ENCODE measurements at regions of chr7 and their contacts with region 1.

Region 1: DNA sequence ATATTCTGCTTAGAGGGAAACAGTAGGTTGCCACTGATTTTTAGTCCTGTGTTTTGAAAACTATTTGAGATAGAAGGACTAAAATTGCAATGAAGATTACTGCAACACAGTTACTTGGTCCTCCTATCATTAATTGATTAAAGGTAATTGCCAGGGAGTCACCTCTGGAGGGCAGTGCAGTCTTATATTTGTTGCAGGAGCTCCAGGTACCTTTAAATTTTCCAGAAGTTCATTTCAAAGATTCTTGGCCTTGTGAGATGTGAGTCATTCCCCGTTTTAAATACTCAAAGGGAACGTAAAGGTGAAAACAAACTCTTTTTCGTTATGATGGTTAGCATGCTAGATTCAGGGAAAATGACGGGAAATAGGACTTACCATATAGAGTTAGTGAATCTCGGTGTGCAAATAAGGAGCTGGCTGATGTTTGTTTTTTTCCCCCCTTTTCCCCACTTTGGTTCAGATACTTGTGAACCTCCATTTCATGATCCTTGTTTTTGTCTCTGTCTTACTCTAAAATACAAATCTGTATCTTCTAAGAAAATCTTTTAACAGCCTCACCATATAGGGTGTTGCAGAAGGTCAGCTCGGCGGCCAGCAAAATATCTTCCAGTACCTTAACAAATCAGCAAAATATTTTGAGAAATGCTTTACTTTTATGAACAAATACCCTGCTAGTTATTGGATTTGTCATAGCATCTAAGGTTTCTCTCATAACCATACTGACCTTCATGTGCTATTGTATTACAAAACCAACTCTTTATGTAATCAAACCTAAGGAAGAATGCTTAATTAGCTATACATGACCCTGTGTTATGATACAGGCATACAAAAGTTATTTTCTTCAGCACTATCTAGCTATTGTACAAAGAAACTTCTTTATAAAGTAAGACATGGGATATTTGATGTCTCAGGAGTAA is 143.0 kb upstream of the HDAC9 start:
- DNase-seq: peak in 1 of 2 donors; percentile 34
- ATAC-seq: peak in 6 of 8 donors; percentile 55 to 71 (median 62)
- H3K4me3 ChIP-seq: no peak overlapping the region
- H3K27ac ChIP-seq: no peak overlapping the region
- H3K4me1 ChIP-seq: peaks cover 0 to 19% (median 8%) of the 10 kb centered on the region in 9 donors
- H3K27me3 ChIP-seq: no peaks in the 10 kb centered on the region
- CTCF ChIP-seq: peak in 8 of 9 donors; percentile 45 to 77 (median 68)

Region 2: GRCh38 chr7:18495412-18496340 is 143.1 kb after region 1 on chr7 and contains the start of gene HDAC9:
- intact Hi-C with region 1: loop called in 6 of 10 experiments (anchors 5 to 10 kb)
- DNase-seq: peak; percentile 17 to 73
- ATAC-seq: peak; percentile 85 to 95 (median 92)
- H3K4me3 ChIP-seq: peak within 1 kb of the TSS; percentile 30 to 64 (median 54)
- H3K27ac ChIP-seq: peak within 1 kb of the TSS; percentile 1 to 86 (median 84)
- H3K4me1 ChIP-seq: peaks cover 0 to 43% (median 19%) of the 10 kb centered on the region in 9 donors
- H3K27me3 ChIP-seq: no peaks in the 10 kb centered on the region
- CTCF ChIP-seq: no peak
- total RNA-seq, gene HDAC9: 8.3 to 66.1 (median 43.2) TPM

Region 3: GRCh38 chr7:18570890-18571478 is 218.4 kb after region 1 on chr7:
- intact Hi-C with region 1: loop called (anchors 2 to 10 kb)
- DNase-seq: no peak
- ATAC-seq: peak in 7 of 8 donors; percentile 20 to 57 (median 49)
- H3K4me3 ChIP-seq: no peak overlapping the region
- H3K27ac ChIP-seq: peak overlapping the region in 1 of 10 donors; percentile 35
- H3K4me1 ChIP-seq: peaks cover 0 to 26% (median 13%) of the 10 kb centered on the region in 9 donors
- H3K27me3 ChIP-seq: no peaks in the 10 kb centered on the region
- CTCF ChIP-seq: peak in 8 of 9 donors; percentile 9 to 72 (median 60)

Region 4: GRCh38 chr7:18648849-18649758 is 296.5 kb after region 1 on chr7:
- intact Hi-C with region 1: no loop called
- DNase-seq: no peak
- ATAC-seq: peak in 3 of 8 donors; percentile 41 to 87 (median 49)
- H3K4me3 ChIP-seq: no peak overlapping the region
- H3K27ac ChIP-seq: no peak overlapping the region
- H3K4me1 ChIP-seq: peaks cover 0 to 6% (median 0%) of the 10 kb centered on the region in 9 donors
- H3K27me3 ChIP-seq: no peaks in the 10 kb centered on the region
- CTCF ChIP-seq: no peak

Region 5: GRCh38 chr7:18666107-18666728 is 313.6 kb after region 1 on chr7:
- intact Hi-C with region 1: loop called in 9 of 10 experiments (anchors 1 to 10 kb)
- DNase-seq: peak; percentile 72 to 84
- ATAC-seq: peak; percentile 86 to 97 (median 87)
- H3K4me3 ChIP-seq: no peak overlapping the region
- H3K27ac ChIP-seq: no peak overlapping the region
- H3K4me1 ChIP-seq: peaks cover 0 to 29% (median 13%) of the 10 kb centered on the region in 9 donors
- H3K27me3 ChIP-seq: no peaks in the 10 kb centered on the region
- CTCF ChIP-seq: peak; percentile 78 to 97 (median 92)

Region 6: GRCh38 chr7:19051767-19052375 is 699.3 kb after region 1 on chr7:
- intact Hi-C with region 1: loop called in 2 of 10 experiments (anchors 10 kb)
- DNase-seq: no peak
- ATAC-seq: no peak
- H3K4me3 ChIP-seq: no peak overlapping the region
- H3K27ac ChIP-seq: no peak overlapping the region
- H3K4me1 ChIP-seq: no peaks in the 10 kb centered on the region
- H3K27me3 ChIP-seq: no peaks in the 10 kb centered on the region
- CTCF ChIP-seq: peak; percentile 43 to 80 (median 73)

Region 7: GRCh38 chr7:19117091-19117869 is 764.7 kb after region 1 on chr7 and contains the start of gene TWIST1:
- intact Hi-C with region 1: loop called in 1 of 10 experiments (anchors 10 kb)
- DNase-seq: peak; percentile 46 to 64
- ATAC-seq: peak; percentile 72 to 88 (median 82)
- H3K4me3 ChIP-seq: peak within 1 kb of the TSS; percentile 47 to 72 (median 62)
- H3K27ac ChIP-seq: peak within 1 kb of the TSS in 9 of 10 donors; percentile 36 to 70 (median 52)
- H3K4me1 ChIP-seq: peaks cover 0 to 32% (median 18%) of the 10 kb centered on the region in 9 donors
- H3K27me3 ChIP-seq: peaks cover 9 to 99% (median 94%) of the 10 kb centered on the region in 7 donors
- CTCF ChIP-seq: no peak
- total RNA-seq, gene TWIST1: 0.45 to 3.5 (median 1.3) TPM

Region 8: DNA sequence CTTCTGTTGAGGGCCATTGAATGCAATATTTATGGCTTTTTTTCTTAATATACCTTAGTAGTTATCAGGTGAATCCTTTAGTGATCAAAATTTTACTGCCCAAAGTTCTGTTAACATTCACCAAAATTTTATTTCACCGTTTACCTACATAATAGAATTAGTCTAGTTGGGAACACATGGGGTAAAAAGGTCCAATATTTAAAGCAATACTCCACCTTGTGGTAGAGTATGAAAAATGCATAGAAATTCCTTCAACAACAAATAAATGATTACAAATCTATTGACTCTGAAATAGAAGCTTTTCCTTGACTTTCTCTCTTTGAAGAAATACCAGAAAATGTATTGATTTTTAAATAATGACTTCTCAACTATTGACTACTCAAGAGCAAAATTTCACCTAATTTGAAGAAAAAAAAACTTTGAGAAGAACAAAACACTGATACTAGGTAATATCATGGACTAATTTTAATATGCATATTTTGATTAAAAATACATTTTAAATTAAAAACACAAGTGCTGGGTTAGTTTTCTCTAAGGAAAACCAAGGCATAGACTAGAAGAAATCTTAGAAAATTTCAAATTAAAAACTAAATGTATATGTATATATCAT is 1312.9 kb after region 1 on chr7:
- intact Hi-C with region 1: loop called in 4 of 10 experiments (anchors 5 to 10 kb)
- DNase-seq: no peak
- ATAC-seq: no peak
- H3K4me3 ChIP-seq: no peak overlapping the region
- H3K27ac ChIP-seq: no peak overlapping the region
- H3K4me1 ChIP-seq: no peaks in the 10 kb centered on the region
- H3K27me3 ChIP-seq: peaks cover 0 to 4% (median 0%) of the 10 kb centered on the region in 7 donors
- CTCF ChIP-seq: peak in 8 of 9 donors; percentile 42 to 70 (median 65)

Measured in heart right ventricle (tissue), 16 donors.